Activated CD4-positive, alpha-beta memory T cell treated with anti-CD3 and anti-CD28 coated beads, Interleukin-2, amount 10 ng/mL, durations not matched to agents 7 days and 5 days (primary cell): ENCODE measurements at regions of chr2 and their contacts with region 1.

Region 1: DNA sequence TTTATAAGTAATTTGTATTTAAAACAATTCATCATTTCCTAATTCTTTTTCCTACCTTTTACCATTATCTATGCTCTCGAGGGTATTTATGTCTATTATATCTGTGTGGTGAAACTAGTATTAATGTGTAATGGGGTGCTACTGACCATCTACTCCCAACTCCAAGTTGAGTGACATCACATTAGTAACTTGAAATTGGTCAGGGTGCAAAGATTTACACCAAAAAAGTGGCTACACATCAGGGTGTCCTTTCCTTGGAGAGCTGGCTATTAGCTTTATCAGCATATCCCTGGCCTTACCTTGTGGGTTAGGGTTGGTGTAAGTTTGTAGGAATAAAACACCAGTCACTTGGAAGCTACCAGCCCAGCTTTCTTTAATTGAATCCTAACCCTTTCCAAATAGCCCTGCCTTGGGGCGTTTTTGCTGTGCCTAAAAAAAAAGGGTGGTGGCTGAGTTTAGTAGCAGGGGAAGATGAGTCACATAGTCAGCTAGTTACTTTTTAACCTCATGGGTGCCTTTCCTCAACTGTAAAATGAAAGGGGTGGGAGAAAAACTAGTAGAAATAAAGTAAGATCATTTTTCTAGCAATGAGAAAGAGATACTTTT is 14.0 kb downstream of the ANXA4 start:
- DNase-seq: peak; percentile 38
- H3K4me3 Mint-ChIP-seq: no peak overlapping the region
- H3K27ac Mint-ChIP-seq: peak overlapping the region; percentile 65
- H3K4me1 Mint-ChIP-seq: peaks cover 28% of the 10 kb centered on the region
- H3K27me3 Mint-ChIP-seq: no peaks in the 10 kb centered on the region

Region 2: GRCh38 chr2:69717861-69718273 is 38.1 kb before region 1 on chr2:
- CTCF ChIA-PET with region 1: no interaction called
- POLR2A ChIA-PET with region 1: no interaction called
- DNase-seq: no peak
- H3K4me3 Mint-ChIP-seq: no peak overlapping the region
- H3K27ac Mint-ChIP-seq: no peak overlapping the region
- H3K4me1 Mint-ChIP-seq: peaks cover 15% of the 10 kb centered on the region
- H3K27me3 Mint-ChIP-seq: no peaks in the 10 kb centered on the region

Region 3: GRCh38 chr2:69741619-69742466 is 14.1 kb before region 1 on chr2 and contains the start of gene ANXA4:
- CTCF ChIA-PET with region 1: interaction called, 13 read pairs
- POLR2A ChIA-PET with region 1: interaction called, 15 read pairs
- DNase-seq: peak; percentile 66
- H3K4me3 Mint-ChIP-seq: peak within 1 kb of the TSS; percentile 84
- H3K27ac Mint-ChIP-seq: peak within 1 kb of the TSS; percentile 88
- H3K4me1 Mint-ChIP-seq: peaks cover 33% of the 10 kb centered on the region
- H3K27me3 Mint-ChIP-seq: peaks cover 8% of the 10 kb centered on the region
- total RNA-seq, gene ANXA4: 86.9 to 90.4 TPM

Region 4: GRCh38 chr2:70086838-70087701 is 331.1 kb after region 1 on chr2 and contains the start of gene PCBP1:
- CTCF ChIA-PET with region 1: no interaction called
- POLR2A ChIA-PET with region 1: no interaction called
- DNase-seq: peak; percentile 95
- H3K4me3 Mint-ChIP-seq: peak within 1 kb of the TSS; percentile 98
- H3K27ac Mint-ChIP-seq: peak within 1 kb of the TSS; percentile 100
- H3K4me1 Mint-ChIP-seq: peaks cover 59% of the 10 kb centered on the region
- H3K27me3 Mint-ChIP-seq: no peaks in the 10 kb centered on the region
- total RNA-seq, gene PCBP1: 475 to 483 TPM